Activated CD4-positive, alpha-beta T cell treated with anti-CD3 and anti-CD28 coated beads, Interleukin-2, amount 10 ng/mL, durations not matched to agents 24 days and 14 days (primary cell): ENCODE measurements at regions of chr15 and their contacts with region 1.

Region 1: GRCh38 chr15:90869601-90870353 is 1.4 kb downstream of the FURIN start:
- DNase-seq: peak; percentile 86
- H3K4me3 Mint-ChIP-seq: peak overlapping the region; percentile 96
- H3K27ac Mint-ChIP-seq: peak overlapping the region; percentile 96
- H3K4me1 Mint-ChIP-seq: peaks cover 53% of the 10 kb centered on the region
- H3K27me3 Mint-ChIP-seq: no peaks in the 10 kb centered on the region

Region 2: DNA sequence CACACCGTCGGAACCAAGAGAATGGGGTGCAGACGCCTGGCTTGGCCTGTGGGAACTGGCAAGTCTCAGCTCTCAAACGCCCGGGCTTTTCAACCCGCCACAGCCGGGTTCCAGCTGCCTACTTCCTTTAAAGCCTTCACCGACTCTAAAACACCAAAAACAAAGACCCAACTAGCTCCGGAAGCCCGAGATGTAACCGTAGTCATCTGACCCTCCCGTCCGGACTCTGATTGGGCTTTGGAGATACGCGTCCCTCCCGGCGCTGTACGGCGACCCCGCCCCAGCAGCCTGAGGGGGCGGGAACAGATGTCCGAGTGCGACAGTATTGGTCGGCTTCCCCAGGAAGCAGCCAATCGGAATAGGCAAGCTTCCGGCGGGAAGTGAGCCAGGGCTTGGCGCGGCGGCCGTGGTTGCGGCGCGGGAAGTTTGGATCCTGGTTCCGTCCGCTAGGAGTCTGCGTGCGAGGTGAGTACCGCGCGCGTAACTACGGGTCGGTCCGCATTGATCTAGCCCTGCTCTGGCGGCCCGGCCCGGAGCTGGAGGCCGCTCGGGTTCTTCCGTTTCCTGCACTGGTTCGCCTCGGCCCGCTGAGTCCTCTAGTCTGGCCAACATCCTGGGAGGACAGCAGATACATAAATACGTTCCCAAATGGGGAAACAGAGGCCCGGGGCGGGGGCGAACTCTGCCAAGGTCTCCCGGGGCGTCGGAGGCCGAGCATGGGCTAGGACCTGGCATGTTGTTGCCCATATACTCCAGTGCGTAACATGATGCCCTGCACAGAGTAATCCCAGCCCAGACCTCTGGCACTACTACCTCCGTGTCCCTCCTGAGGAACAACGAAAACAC is 152.6 kb before region 1 on chr15 and contains the start of gene BLM:
- intact Hi-C with region 1: loop called (anchors 2 kb)
- DNase-seq: peak; percentile 99
- H3K4me3 Mint-ChIP-seq: peak within 1 kb of the TSS; percentile 88
- H3K27ac Mint-ChIP-seq: peak within 1 kb of the TSS; percentile 96
- H3K4me1 Mint-ChIP-seq: peaks cover 27% of the 10 kb centered on the region
- H3K27me3 Mint-ChIP-seq: no peaks in the 10 kb centered on the region
- total RNA-seq, gene BLM: 64.1 and 66.4 TPM in 2 replicates

Region 3: DNA sequence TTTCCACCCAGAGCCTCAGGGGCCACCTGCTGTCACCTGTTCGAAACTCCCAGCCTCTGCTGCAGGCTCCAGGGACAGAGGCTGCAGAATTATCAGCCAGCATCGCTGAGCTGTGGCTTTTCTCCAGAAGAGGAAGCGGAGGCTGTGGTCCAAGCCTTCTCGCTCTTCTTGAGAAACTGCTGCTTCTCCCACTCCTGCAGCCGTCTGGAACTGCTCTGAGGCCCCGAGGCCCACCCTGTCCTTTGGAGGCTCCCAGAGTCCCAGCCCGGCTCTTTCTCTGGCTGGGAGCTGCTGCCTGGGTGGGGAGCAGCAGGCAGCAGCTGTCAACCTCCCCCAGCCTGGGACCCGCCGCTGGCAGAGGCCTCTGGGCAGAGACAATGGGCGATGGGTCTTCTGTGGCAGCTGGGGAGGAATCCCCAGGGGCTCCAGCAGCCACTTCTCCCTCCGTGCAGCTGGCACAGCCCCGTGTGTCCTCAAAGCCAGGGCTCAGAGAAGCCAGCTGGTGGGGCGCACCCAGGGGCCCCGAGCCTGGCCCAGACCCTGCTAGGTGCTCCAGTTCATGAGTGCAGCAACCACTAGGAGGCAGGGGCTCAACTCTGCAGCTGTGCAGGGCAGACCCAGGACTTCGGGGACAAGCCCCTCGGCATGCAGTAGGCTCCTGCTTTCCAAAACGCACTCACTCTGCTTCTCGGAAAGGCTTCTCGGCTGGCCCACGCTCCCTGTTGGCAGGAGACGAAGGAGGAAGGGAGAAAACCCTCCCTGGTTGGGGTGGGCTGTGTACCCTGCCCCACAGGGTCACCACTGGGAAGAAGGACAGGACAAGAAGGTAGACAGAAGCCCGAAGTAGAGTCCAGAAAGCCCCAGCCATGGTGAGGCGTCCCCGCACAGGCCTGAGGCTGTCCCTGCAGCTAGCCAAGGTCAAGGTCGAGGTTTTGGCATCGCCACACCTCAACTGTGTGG is 51.2 kb before region 1 on chr15:
- intact Hi-C with region 1: loop called (anchors 1 kb)
- DNase-seq: peak; percentile 86
- H3K4me3 Mint-ChIP-seq: peak overlapping the region; percentile 80
- H3K27ac Mint-ChIP-seq: peak overlapping the region; percentile 99
- H3K4me1 Mint-ChIP-seq: peaks cover 69% of the 10 kb centered on the region
- H3K27me3 Mint-ChIP-seq: no peaks in the 10 kb centered on the region

Region 4: GRCh38 chr15:90829942-90830440 is 39.8 kb before region 1 on chr15:
- intact Hi-C with region 1: loop called (anchors 1 kb)
- DNase-seq: peak; percentile 94
- H3K4me3 Mint-ChIP-seq: peak overlapping the region; percentile 80
- H3K27ac Mint-ChIP-seq: peak overlapping the region; percentile 98
- H3K4me1 Mint-ChIP-seq: peaks cover 55% of the 10 kb centered on the region
- H3K27me3 Mint-ChIP-seq: no peaks in the 10 kb centered on the region

Region 5: DNA sequence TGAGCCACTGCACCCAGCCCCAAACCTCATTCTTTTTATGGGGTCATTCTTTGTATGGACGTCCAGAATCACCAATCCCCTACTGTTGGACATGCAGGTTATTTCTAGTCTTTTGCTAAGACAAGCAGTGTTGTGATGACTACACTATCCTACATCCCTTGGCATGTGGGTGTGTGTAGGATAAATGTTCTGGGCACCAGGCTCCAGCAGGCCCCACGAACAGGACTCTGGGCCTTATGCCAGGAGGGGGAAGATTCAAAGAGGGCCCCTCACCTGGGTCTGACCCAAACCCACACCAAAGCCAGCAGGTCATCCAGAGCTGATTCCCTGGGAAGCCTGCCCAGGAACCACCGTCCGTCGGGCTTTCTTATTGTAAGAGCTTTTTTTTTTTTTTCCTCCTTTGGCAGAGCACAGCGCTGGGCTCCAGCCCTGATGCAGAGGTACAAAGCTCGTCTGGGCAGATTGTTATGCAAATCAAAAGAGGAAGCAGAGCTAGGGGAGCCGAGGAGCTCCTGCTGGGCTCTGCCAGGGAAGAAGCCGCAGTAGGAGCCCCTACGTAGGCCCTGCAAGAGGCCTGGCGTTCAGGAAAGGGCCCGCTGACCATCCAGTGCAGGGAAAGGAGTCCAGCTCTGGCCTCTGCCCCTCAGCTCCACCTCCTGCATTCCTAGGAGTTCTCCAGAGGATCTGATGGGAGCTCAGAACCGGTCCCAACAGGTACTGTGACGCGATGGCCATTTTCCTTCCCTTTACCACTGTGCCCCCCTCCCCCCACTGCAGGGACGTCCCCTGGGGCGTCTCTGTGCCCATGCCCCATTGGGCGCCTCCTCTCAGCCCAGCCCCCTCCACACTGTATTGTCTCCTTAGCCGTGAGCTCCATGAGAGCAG is 30.3 kb before region 1 on chr15:
- intact Hi-C with region 1: loop called (anchors 1 kb)
- DNase-seq: peak; percentile 74
- H3K4me3 Mint-ChIP-seq: peak overlapping the region; percentile 76
- H3K27ac Mint-ChIP-seq: peak overlapping the region; percentile 93
- H3K4me1 Mint-ChIP-seq: peaks cover 69% of the 10 kb centered on the region
- H3K27me3 Mint-ChIP-seq: no peaks in the 10 kb centered on the region

Region 6: DNA sequence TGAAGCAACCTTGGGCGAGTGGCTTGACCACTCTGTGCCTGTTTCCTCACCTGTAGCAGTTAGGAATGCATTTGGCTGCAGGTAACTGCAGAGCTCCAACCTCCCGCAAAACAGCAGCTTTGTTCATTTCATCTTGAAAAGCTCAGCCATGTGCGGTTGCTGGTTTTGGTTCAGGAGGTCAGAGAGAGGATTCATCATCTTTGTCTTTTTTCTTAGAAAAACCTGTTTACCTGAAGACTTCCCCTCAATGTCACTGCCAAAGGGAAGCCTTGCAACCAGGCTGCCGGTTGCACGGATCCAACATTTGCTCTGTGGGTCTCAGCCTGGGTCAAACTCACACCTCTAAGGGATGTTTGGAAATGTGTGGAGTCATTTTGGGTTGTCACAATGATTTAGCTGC is 17.8 kb before region 1 on chr15:
- intact Hi-C with region 1: loop called (anchors 1 kb)
- DNase-seq: peak; percentile 88
- H3K4me3 Mint-ChIP-seq: peak overlapping the region; percentile 72
- H3K27ac Mint-ChIP-seq: peak overlapping the region; percentile 94
- H3K4me1 Mint-ChIP-seq: peaks cover 64% of the 10 kb centered on the region
- H3K27me3 Mint-ChIP-seq: no peaks in the 10 kb centered on the region

Region 7: GRCh38 chr15:90886041-90886614 is 16.4 kb after region 1 on chr15:
- intact Hi-C with region 1: loop called (anchors 1 kb)
- DNase-seq: peak; percentile 94
- H3K4me3 Mint-ChIP-seq: peak overlapping the region; percentile 55
- H3K27ac Mint-ChIP-seq: peak overlapping the region; percentile 81
- H3K4me1 Mint-ChIP-seq: peaks cover 38% of the 10 kb centered on the region
- H3K27me3 Mint-ChIP-seq: no peaks in the 10 kb centered on the region